A549 (cell line): ENCODE measurements at regions of chr11 and their contacts with region 1.

Region 1: DNA sequence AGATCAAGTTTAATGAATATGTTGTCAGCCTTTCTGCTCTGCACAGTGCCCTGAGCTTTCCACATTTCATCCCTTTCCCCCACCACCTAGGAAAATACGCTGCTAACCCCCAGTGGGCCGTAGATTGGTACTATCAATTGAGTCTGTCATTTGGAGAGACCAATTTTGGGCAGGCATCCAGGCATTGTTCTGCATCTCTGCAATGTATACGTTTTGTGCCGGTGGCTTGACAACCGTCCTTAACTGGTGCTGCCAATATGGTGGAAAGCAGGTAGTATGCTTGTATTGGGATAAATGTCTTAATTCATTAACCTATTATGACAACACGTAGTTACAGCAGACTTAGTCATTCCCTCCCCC is 1.3 kb downstream of the ELMOD1 start:
- DNase-seq: no peak
- ATAC-seq: no peak
- H3K4me3 ChIP-seq: peak overlapping the region; percentile 61; the same call in 2 of the 3 replicates
- H3K27ac ChIP-seq: no peak overlapping the region
- H3K4me1 ChIP-seq: peaks cover 9% of the 10 kb centered on the region; the same call in 1 of the 3 replicates
- CTCF ChIP-seq: no peak
- EP300 ChIP-seq: no peak
- POLR2A ChIP-seq: no peak
- RAD21 ChIP-seq: no peak

Region 2: GRCh38 chr11:107573438-107573837 is 18.8 kb before region 1 on chr11:
- CTCF ChIA-PET with region 1: interaction called, 14 read pairs
- POLR2A ChIA-PET with region 1: no interaction called
- DNase-seq: no peak
- ATAC-seq: no peak
- H3K4me3 ChIP-seq: no peak overlapping the region
- H3K27ac ChIP-seq: no peak overlapping the region
- H3K4me1 ChIP-seq: no peaks in the 10 kb centered on the region
- CTCF ChIP-seq: no peak
- EP300 ChIP-seq: no peak
- POLR2A ChIP-seq: no peak
- RAD21 ChIP-seq: no peak

Region 3: GRCh38 chr11:107695446-107695845 is 103.2 kb after region 1 on chr11:
- CTCF ChIA-PET with region 1: no interaction called
- POLR2A ChIA-PET with region 1: no interaction called
- DNase-seq: no peak
- ATAC-seq: peak in 1 of 2 experiments; percentile 29; a peak in 2 of 6 replicates
- H3K4me3 ChIP-seq: no peak overlapping the region
- H3K27ac ChIP-seq: peak overlapping the region; percentile 64 to 67; a peak in 4 of 6 replicates
- H3K4me1 ChIP-seq: peaks cover 32% of the 10 kb centered on the region
- CTCF ChIP-seq: no peak
- EP300 ChIP-seq: no peak
- POLR2A ChIP-seq: no peak
- RAD21 ChIP-seq: no peak